Panc1 (cell line): ENCODE measurements at regions of chr11 and their contacts with region 1.

Region 1: DNA sequence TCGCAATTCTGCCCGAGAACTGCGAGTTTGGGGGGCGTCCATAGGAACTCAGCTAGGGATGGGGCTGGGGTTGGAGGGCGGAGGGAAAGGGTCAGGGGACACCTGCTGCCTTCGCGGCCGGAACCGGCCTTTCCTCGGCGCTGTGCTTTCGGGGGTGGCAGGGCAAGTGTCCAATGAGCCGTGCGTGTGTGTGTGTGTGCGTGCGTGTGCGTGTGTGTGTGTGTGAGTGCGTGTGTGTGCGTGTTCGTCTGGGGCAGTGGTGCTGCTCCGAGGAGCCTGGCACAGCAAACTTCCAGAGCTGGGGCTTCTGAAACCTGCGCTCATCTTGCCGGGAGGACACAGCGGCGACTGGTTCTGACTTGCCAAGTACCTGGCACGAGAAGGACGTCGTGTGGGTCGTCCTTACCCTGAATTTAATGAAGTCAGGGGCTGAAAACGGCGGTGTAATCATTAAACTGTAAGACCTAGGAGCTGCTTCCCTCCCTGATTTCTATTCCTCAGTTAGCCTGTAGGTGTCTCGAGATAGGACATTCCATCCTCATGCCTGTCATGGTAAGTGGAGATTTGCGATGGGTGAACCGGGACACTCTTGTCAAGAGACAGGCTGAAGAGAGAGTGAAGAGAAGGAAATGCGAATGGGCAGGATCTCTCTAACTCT is 27.0 kb upstream of the AMOTL1 start:
- DNase-seq: peak; percentile 59
- ATAC-seq: peak; percentile 78
- H3K4me3 ChIP-seq: peak overlapping the region; percentile 53 to 69
- H3K27ac ChIP-seq: peak overlapping the region; percentile 66
- H3K4me1 ChIP-seq: peaks cover 54% of the 10 kb centered on the region
- H3K27me3 ChIP-seq: peaks cover 7% of the 10 kb centered on the region; the same call in 1 of the 2 replicates
- CTCF ChIP-seq: peak; percentile 77

Region 2: GRCh38 chr11:94767761-94768601 is 26.8 kb after region 1 on chr11 and contains the start of gene AMOTL1:
- CTCF ChIA-PET with region 1: interaction called, 3 read pairs
- POLR2A ChIA-PET with region 1: interaction called, 10 read pairs
- in situ Hi-C with region 1: no loop called
- intact Hi-C with region 1: no loop called
- DNase-seq: no peak
- ATAC-seq: peak; percentile 90
- H3K4me3 ChIP-seq: peak within 1 kb of the TSS; percentile 67 to 70
- H3K27ac ChIP-seq: peak within 1 kb of the TSS; percentile 62
- H3K4me1 ChIP-seq: peaks cover 28% of the 10 kb centered on the region
- H3K27me3 ChIP-seq: peaks cover 30% of the 10 kb centered on the region
- CTCF ChIP-seq: no peak; the same call in 1 of the 2 replicates
- total RNA-seq, gene AMOTL1: 16.0 TPM